MCF 10A (cell line): ENCODE measurements at regions of chr7 and their contacts with region 1.

Region 1: GRCh38 chr7:55018361-55019190 is at the start of gene EGFR:
- DNase-seq: peak; percentile 80
- H3K4me3 Mint-ChIP-seq: peak within 1 kb of the TSS; percentile 86
- H3K27ac Mint-ChIP-seq: peak within 1 kb of the TSS; percentile 93
- H3K4me1 Mint-ChIP-seq: no peaks in the 10 kb centered on the region
- H3K27me3 Mint-ChIP-seq: no peaks in the 10 kb centered on the region
- CTCF ChIP-seq: no peak
- total RNA-seq, gene EGFR: 371 and 448 TPM in 2 replicates

Region 2: DNA sequence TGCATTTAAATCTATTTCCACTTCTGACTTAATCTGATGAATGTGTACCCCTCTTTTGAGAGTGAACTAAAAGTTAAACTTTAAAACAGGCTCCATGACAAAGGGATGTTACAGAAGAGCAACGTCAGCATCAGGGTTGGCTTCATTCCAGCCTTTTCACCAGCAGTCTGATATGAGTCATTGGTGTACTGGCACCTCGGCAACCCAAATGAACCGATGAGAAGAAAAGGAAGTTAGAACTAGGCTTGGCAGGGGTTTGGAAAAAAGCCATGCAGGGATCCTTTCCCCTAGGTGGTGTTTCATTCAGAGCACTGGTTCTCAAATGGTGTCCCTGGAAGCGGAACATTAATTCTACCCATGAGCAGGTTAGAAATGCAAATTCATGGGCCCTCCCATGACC is 313.1 kb before region 1 on chr7:
- CTCF ChIA-PET with region 1: no interaction called
- POLR2A ChIA-PET with region 1: no interaction called
- intact Hi-C with region 1: no loop called
- DNase-seq: peak; percentile 91
- H3K4me3 Mint-ChIP-seq: no peak overlapping the region
- H3K27ac Mint-ChIP-seq: peak overlapping the region; percentile 7
- H3K4me1 Mint-ChIP-seq: peaks cover 6% of the 10 kb centered on the region
- H3K27me3 Mint-ChIP-seq: peaks cover 11% of the 10 kb centered on the region
- CTCF ChIP-seq: no peak

Region 3: DNA sequence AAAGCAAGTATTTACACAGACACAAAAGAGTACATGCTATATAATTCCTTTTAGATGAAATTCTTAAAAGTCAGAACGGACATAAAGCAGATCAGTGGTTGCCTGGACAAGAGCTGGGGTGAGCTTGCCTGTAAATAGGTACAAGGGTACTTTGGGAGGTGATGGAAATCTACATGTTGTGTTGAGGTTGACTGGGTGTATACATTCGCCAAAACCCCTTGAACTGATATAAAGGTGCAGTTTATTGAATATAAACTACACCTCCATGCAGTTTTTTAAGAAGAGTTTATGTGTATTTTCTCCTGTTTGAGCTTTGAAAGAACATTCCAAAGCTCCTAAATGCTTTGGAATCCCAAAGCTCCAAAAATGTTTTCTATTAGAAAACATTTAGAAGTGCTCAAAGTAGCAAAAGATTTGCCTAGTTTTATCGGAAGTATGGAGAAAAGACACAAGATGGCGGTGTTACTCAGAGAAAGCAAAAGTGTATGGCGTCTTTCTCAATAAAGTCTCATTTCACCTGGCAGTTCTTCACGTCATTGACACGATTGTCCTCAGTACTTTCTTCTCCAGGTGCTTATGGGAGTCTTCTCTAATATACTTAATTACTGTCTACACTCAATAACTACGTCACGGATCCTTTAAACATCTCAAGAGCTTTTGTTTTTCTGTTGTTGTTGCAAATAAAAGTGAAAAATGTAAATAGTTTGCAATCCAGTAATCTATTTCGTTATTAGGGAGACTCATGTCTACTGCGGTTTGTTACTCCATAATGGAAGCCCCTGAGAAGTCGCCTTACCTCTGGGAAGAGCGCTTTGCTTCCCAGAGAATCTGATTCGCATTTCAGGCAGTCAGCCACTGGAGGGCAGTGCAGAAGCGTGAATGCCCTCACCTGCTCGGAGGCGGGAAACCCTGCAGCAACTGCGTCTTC is 244.8 kb before region 1 on chr7:
- CTCF ChIA-PET with region 1: interaction called, 39 read pairs
- POLR2A ChIA-PET with region 1: interaction called, 7 read pairs
- intact Hi-C with region 1: loop called (anchors 5 kb)
- DNase-seq: peak; percentile 90
- H3K4me3 Mint-ChIP-seq: peak overlapping the region; percentile 75
- H3K27ac Mint-ChIP-seq: peak overlapping the region; percentile 75
- H3K4me1 Mint-ChIP-seq: peaks cover 13% of the 10 kb centered on the region
- H3K27me3 Mint-ChIP-seq: no peaks in the 10 kb centered on the region
- CTCF ChIP-seq: peak; percentile 80

Region 4: DNA sequence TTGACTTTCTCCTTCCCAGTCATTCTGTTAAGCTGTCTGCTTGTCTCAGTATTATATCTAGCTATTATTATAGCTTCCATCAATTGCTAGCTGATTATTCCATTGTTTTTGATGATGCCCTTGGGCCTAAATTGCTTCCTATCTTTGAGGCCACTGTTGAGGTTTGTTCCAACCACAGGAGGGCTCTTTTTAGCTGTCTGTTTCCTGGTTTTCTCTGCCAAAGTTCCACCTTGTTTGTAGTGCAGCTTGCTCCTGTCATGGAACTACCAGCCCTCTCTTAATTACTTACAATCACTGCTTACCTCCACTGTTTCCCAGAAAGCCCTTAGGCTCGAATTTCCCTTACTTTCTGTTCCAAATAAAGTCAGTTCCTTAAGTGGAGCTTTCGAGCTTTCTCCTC is 140.9 kb before region 1 on chr7:
- CTCF ChIA-PET with region 1: interaction called, 4 read pairs
- POLR2A ChIA-PET with region 1: interaction called, 48 read pairs
- intact Hi-C with region 1: loop called (anchors 10 kb)
- DNase-seq: peak; percentile 39
- H3K4me3 Mint-ChIP-seq: no peak overlapping the region
- H3K27ac Mint-ChIP-seq: no peak overlapping the region
- H3K4me1 Mint-ChIP-seq: peaks cover 19% of the 10 kb centered on the region
- H3K27me3 Mint-ChIP-seq: no peaks in the 10 kb centered on the region
- CTCF ChIP-seq: peak; percentile 26

Region 5: DNA sequence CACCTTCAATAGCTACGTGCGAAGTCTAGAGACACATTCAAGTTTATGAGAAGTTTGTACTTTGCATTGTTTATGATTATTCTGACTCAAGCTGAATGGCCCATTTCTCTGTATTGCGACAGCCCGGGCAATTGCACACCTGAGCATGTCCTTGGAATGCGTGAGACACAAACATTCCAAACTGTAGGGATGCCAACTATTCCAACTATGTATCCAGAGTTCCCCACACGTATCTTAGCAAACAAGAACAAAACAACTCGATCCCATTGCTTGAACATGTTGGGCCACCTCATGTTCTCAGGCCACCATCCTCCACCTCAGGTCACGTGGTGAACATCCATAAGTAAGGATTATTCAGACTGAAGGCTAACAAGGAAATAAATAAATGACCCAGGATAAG is 51.2 kb before region 1 on chr7:
- CTCF ChIA-PET with region 1: interaction called, 5 read pairs
- POLR2A ChIA-PET with region 1: interaction called, 170 read pairs
- intact Hi-C with region 1: loop called (anchors 1 kb)
- DNase-seq: peak; percentile 93
- H3K4me3 Mint-ChIP-seq: peak overlapping the region; percentile 35
- H3K27ac Mint-ChIP-seq: peak overlapping the region; percentile 99
- H3K4me1 Mint-ChIP-seq: peaks cover 48% of the 10 kb centered on the region
- H3K27me3 Mint-ChIP-seq: no peaks in the 10 kb centered on the region
- CTCF ChIP-seq: no peak

Region 6: DNA sequence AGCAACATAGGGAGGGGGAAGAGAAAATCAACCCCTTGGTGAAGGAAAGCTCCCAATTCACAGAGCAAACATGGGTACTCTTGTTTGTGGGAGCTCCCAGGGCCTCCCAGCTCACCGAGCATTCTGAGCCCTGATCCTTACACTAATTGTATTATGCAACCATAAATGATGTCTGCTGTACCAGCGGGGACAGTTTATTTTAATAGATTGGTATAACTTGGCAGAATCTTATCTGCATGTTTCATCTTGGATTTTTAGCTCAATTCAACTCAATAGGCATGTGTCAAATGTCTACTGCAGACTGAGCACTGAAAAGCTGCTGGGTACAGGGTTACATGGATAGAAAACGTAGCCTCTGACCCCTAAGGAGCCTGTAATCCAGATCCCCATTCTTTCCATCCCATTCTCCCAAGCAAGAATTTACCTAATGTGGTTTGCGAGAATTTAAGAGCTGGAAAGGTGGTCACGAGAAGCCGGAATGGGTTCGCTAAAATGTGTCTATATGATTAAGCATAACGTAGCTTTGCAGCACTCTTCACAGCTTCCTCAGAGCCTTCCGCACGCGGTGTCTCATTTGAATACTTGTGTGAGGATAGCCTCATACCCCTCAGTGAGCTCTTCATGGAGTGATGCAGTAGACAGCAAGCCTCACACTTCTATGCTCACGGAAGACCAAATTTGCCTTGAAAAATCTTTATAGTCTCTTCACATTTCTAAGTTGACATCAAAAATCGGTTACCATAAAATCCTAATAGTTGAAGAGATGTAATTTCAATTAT is 18.6 kb after region 1 on chr7:
- CTCF ChIA-PET with region 1: interaction called, 6 read pairs
- POLR2A ChIA-PET with region 1: interaction called, 18 read pairs
- intact Hi-C with region 1: no loop called
- DNase-seq: no peak
- H3K4me3 Mint-ChIP-seq: no peak overlapping the region
- H3K27ac Mint-ChIP-seq: peak overlapping the region; percentile 16
- H3K4me1 Mint-ChIP-seq: peaks cover 31% of the 10 kb centered on the region
- H3K27me3 Mint-ChIP-seq: no peaks in the 10 kb centered on the region
- CTCF ChIP-seq: no peak

Region 7: GRCh38 chr7:55073945-55074499 is 55.4 kb after region 1 on chr7:
- CTCF ChIA-PET with region 1: interaction called, 3 read pairs
- POLR2A ChIA-PET with region 1: interaction called, 10 read pairs
- intact Hi-C with region 1: loop called (anchors 2 kb)
- DNase-seq: peak; percentile 98
- H3K4me3 Mint-ChIP-seq: peak overlapping the region; percentile 80
- H3K27ac Mint-ChIP-seq: peak overlapping the region; percentile 100
- H3K4me1 Mint-ChIP-seq: peaks cover 34% of the 10 kb centered on the region
- H3K27me3 Mint-ChIP-seq: no peaks in the 10 kb centered on the region
- CTCF ChIP-seq: no peak

Region 8: GRCh38 chr7:55185941-55186609 is 167.5 kb after region 1 on chr7:
- CTCF ChIA-PET with region 1: no interaction called
- POLR2A ChIA-PET with region 1: interaction called, 9 read pairs
- intact Hi-C with region 1: loop called (anchors 2 kb)
- DNase-seq: peak; percentile 97
- H3K4me3 Mint-ChIP-seq: no peak overlapping the region
- H3K27ac Mint-ChIP-seq: peak overlapping the region; percentile 79
- H3K4me1 Mint-ChIP-seq: peaks cover 29% of the 10 kb centered on the region
- H3K27me3 Mint-ChIP-seq: no peaks in the 10 kb centered on the region
- CTCF ChIP-seq: no peak